Motor neuron (in vitro differentiated cells): ENCODE measurements at regions of chr1 and their contacts with region 1.

Region 1: GRCh38 chr1:163174524-163175437 is 27.9 kb downstream of the RGS5 start:
- ATAC-seq: peak; percentile 32 to 74 (median 53)
- H3K4me3 ChIP-seq: no peak overlapping the region
- H3K27ac ChIP-seq: no peak overlapping the region
- H3K4me1 ChIP-seq: peaks cover 0 to 18% of the 10 kb centered on the region in 2 donors

Region 2: GRCh38 chr1:162854245-162854882 is 320.4 kb before region 1 on chr1:
- in situ Hi-C with region 1: loop called in 2 of 9 experiments (anchors 25 kb)
- ATAC-seq: peak; percentile 48 to 97 (median 68)
- H3K4me3 ChIP-seq: no peak overlapping the region
- H3K27ac ChIP-seq: no peak overlapping the region
- H3K4me1 ChIP-seq: no peaks in the 10 kb centered on the region

Region 3: GRCh38 chr1:162878000-162878596 is 296.7 kb before region 1 on chr1:
- in situ Hi-C with region 1: loop called in 3 of 9 experiments (anchors 10 to 25 kb)
- ATAC-seq: peak; percentile 29 to 78 (median 58)
- H3K4me3 ChIP-seq: no peak overlapping the region
- H3K27ac ChIP-seq: no peak overlapping the region
- H3K4me1 ChIP-seq: peaks cover 0 to 7% of the 10 kb centered on the region in 2 donors